ENCODE measurements at regions of chr5 and their contacts with region 1.

Region 1: DNA sequence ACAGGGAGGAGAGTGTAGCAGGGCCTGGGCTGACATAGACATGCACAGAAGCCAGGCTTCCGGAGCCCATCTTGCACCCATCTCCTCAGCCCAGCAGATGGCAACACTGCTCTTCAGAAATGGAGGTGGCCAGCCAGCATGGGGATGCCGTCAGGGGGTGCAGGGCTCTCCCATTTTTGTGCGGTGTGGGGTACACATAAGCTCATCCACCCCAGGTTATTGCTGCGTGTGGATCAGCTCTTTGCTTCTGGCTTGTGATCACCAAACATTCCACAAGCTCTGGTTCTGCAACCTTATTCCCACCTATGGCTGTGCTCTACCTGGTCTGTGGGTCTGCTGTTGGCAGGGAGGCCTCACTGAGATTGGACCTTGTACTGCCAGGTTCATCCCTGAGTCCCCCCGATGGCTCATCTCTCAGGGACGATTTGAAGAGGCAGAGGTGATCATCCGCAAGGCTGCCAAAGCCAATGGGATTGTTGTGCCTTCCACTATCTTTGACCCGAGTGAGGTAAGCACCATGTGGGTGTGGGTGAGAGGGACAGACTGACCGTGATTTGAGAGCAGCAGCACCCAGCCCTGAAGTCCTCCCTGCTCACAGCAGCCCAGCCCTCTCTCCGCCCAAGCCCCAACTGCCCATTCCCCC is 17.3 kb downstream of the SLC22A5 start:
- DNase-seq: peak; percentile 75 to 80 (median 78)
- H3K4me3 ChIP-seq: no peak overlapping the region
- H3K4me3 Mint-ChIP-seq: peak overlapping the region in 1 of 8 donors; percentile 36
- H3K27ac ChIP-seq: no peak overlapping the region
- H3K27ac Mint-ChIP-seq: peak overlapping the region; percentile 22 to 88 (median 31)
- H3K4me1 ChIP-seq: peaks cover 20% of the 10 kb centered on the region
- H3K4me1 Mint-ChIP-seq: peaks cover 20 to 53% (median 33%) of the 10 kb centered on the region in 4 donors
- H3K27me3 ChIP-seq: no peaks in the 10 kb centered on the region
- H3K27me3 Mint-ChIP-seq: no peaks in the 10 kb centered on the region

Region 2: GRCh38 chr5:132369474-132370180 is 17.1 kb before region 1 on chr5 and contains the start of gene SLC22A5:
- CTCF ChIA-PET with region 1: interaction called, 17 read pairs
- POLR2A ChIA-PET with region 1: interaction called, 8 read pairs
- intact Hi-C with region 1: no loop called
- DNase-seq: peak; percentile 67 to 77 (median 72)
- H3K4me3 ChIP-seq: peak within 1 kb of the TSS; percentile 20 to 72
- H3K4me3 Mint-ChIP-seq: peak within 1 kb of the TSS; percentile 83 to 91 (median 87)
- H3K27ac ChIP-seq: peak within 1 kb of the TSS; percentile 74
- H3K27ac Mint-ChIP-seq: peak within 1 kb of the TSS; percentile 70 to 93 (median 88)
- H3K4me1 ChIP-seq: peaks cover 31% of the 10 kb centered on the region
- H3K4me1 Mint-ChIP-seq: peaks cover 13 to 32% (median 26%) of the 10 kb centered on the region in 4 donors
- H3K27me3 ChIP-seq: no peaks in the 10 kb centered on the region
- H3K27me3 Mint-ChIP-seq: no peaks in the 10 kb centered on the region
- total RNA-seq, gene SLC22A5: 8.9 to 10.0 TPM

Region 3: DNA sequence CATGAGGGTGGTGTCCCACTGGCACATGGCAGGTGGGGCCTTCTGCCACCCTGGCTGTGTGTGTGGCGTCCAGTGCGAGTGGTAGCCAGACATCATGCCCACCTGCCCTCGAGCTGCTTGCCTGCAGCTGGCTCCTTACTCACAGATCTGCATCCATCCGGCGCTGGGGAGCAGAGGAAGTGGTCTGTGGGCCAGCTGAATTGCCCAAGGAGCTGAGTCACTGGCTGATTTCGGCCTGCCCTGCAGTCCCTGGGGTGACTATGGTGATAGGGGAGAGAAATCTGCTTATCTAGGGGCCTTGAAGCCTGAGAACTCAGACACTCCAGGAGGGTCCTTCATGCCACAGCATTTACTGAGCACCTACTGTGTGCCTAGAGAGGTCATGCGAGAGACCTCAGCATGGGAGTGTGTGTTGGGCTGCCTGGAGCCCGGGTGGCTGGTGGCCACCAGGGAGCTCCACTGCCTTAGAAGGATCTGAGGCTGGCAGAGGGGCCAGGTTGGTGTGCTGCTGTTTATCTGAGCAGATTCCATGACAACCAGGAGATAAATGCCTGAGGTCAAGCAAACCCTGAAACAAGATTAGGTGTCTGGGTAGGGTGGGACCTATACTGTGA is 39.9 kb after region 1 on chr5:
- CTCF ChIA-PET with region 1: interaction called, 25 read pairs
- POLR2A ChIA-PET with region 1: interaction called, 10 read pairs
- intact Hi-C with region 1: no loop called
- DNase-seq: peak; percentile 37 to 83 (median 44)
- H3K4me3 ChIP-seq: peak overlapping the region; percentile 10 to 28
- H3K4me3 Mint-ChIP-seq: peak overlapping the region; percentile 67 to 83 (median 76)
- H3K27ac ChIP-seq: peak overlapping the region; percentile 77
- H3K27ac Mint-ChIP-seq: peak overlapping the region; percentile 96 to 99 (median 98)
- H3K4me1 ChIP-seq: peaks cover 100% of the 10 kb centered on the region
- H3K4me1 Mint-ChIP-seq: peaks cover 80 to 98% (median 94%) of the 10 kb centered on the region in 4 donors
- H3K27me3 ChIP-seq: no peaks in the 10 kb centered on the region
- H3K27me3 Mint-ChIP-seq: no peaks in the 10 kb centered on the region

Region 4: GRCh38 chr5:132473019-132473531 is 86.3 kb after region 1 on chr5:
- CTCF ChIA-PET with region 1: interaction called, 21 read pairs
- POLR2A ChIA-PET with region 1: interaction called, 4 read pairs
- intact Hi-C with region 1: no loop called
- DNase-seq: peak; percentile 90 to 96 (median 95)
- H3K4me3 ChIP-seq: no peak overlapping the region
- H3K4me3 Mint-ChIP-seq: peak overlapping the region; percentile 27 to 86 (median 68)
- H3K27ac ChIP-seq: peak overlapping the region; percentile 65
- H3K27ac Mint-ChIP-seq: peak overlapping the region; percentile 91 to 99 (median 97)
- H3K4me1 ChIP-seq: peaks cover 97% of the 10 kb centered on the region
- H3K4me1 Mint-ChIP-seq: peaks cover 60 to 96% (median 79%) of the 10 kb centered on the region in 4 donors
- H3K27me3 ChIP-seq: no peaks in the 10 kb centered on the region
- H3K27me3 Mint-ChIP-seq: peaks cover 0 to 5% of the 10 kb centered on the region in 2 donors

Region 5: GRCh38 chr5:132495667-132496190 is 109.0 kb after region 1 on chr5:
- CTCF ChIA-PET with region 1: interaction called, 543 read pairs
- POLR2A ChIA-PET with region 1: interaction called, 151 read pairs
- intact Hi-C with region 1: no loop called
- DNase-seq: peak; percentile 52 to 76 (median 60)
- H3K4me3 ChIP-seq: peak overlapping the region; percentile 25 to 61
- H3K4me3 Mint-ChIP-seq: peak overlapping the region; percentile 93 to 99 (median 96)
- H3K27ac ChIP-seq: peak overlapping the region; percentile 99
- H3K27ac Mint-ChIP-seq: peak overlapping the region; percentile 95 to 99 (median 98)
- H3K4me1 ChIP-seq: peaks cover 83% of the 10 kb centered on the region
- H3K4me1 Mint-ChIP-seq: peaks cover 41 to 92% (median 66%) of the 10 kb centered on the region in 4 donors
- H3K27me3 ChIP-seq: no peaks in the 10 kb centered on the region
- H3K27me3 Mint-ChIP-seq: no peaks in the 10 kb centered on the region

Region 6: DNA sequence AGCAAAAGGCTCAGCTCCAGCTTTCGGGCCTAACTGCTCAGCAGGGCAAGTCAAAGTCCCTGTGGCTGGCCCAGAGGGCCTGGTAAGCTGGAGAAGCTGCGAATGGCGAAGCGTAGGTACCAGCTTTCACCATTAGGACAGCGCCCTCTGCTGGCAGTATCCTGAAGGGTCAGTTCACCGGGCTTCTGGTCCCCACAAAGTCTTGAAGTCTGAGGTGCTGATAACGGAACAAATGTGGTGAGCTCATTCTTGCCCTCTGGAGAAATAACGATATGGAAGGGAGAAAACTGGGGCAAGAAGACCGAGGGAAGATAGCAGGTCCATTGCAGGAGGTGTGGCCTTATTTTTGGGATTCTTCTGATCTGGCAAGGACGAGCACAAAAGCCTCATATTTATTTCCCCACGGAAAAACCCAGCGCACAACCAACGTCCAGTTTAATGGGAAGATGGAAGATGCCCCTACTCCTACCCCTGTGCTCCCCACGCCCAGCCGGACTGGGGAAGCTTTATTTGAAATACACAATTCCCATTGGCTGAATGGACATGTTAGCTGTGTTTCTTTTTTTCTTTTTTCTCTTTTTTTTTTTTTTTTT is 433.5 kb after region 1 on chr5:
- CTCF ChIA-PET with region 1: interaction called, 25 read pairs
- POLR2A ChIA-PET with region 1: no interaction called
- intact Hi-C with region 1: loop called (anchors 1 kb)
- DNase-seq: peak; percentile 78 to 84 (median 81)
- H3K4me3 ChIP-seq: no peak overlapping the region
- H3K4me3 Mint-ChIP-seq: peak overlapping the region in 5 of 8 donors; percentile 6 to 69 (median 49)
- H3K27ac ChIP-seq: no peak overlapping the region
- H3K27ac Mint-ChIP-seq: peak overlapping the region in 2 of 7 donors; percentile 3 to 51
- H3K4me1 ChIP-seq: peaks cover 11% of the 10 kb centered on the region
- H3K4me1 Mint-ChIP-seq: peaks cover 2 to 14% (median 7%) of the 10 kb centered on the region in 4 donors
- H3K27me3 ChIP-seq: peaks cover 15% of the 10 kb centered on the region
- H3K27me3 Mint-ChIP-seq: peaks cover 15 to 17% of the 10 kb centered on the region in 2 donors

Measured in CD4-positive, alpha-beta memory T cell (primary cell).